ENCODE measurements at regions of chr9 and their contacts with region 1.

Region 1: GRCh38 chr9:70602321-70603019 is 188.0 kb upstream of the KLF9 start:
- DNase-seq: peak; percentile 54
- ATAC-seq: peak; percentile 73
- H3K4me3 Mint-ChIP-seq: no peak overlapping the region
- H3K27ac Mint-ChIP-seq: no peak overlapping the region
- H3K4me1 Mint-ChIP-seq: no peaks in the 10 kb centered on the region
- H3K27me3 Mint-ChIP-seq: no peaks in the 10 kb centered on the region

Region 2: DNA sequence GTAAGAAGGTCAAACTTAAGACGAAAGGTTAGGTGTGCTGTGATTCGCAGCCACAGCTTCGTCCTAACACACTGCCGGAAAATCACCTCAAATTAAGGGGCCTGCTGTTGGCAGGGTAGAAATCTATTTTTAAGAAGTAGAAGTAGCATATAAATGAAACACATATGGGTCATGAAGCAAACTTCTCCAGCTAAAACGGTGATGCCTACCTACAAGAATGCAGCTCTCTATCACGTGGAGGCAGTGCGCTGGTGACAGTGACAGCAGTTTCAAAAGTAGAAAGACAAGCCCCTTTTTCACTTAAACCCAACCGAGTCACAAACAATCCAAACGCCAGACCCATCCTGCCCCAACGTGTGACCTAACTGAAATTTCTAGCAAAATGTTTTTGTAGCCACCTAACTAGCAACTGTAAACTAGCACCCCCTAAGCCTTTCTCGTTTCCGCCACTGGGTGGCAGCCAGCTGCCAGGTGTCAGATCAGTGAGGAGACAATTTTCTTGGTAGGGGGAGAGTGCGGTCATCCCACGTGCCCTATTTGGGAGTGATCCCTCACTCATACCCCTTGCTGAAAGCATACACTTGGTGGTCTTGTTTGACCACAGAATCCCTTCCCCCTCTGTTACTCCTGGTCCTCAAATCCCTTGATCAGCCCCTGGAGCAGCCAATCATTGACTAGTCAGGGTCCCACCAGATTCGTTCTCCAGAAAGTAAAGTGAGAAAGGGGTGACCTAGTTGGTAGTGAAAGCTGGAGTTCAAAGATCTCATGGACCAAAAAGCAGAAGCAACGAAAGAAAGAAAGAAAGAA is 630.6 kb before region 1 on chr9:
- CTCF ChIA-PET with region 1: interaction called, 13 read pairs
- DNase-seq: peak; percentile 63
- ATAC-seq: no peak
- H3K4me3 Mint-ChIP-seq: no peak overlapping the region
- H3K27ac Mint-ChIP-seq: no peak overlapping the region
- H3K4me1 Mint-ChIP-seq: no peaks in the 10 kb centered on the region
- H3K27me3 Mint-ChIP-seq: peaks cover 9% of the 10 kb centered on the region

Region 3: DNA sequence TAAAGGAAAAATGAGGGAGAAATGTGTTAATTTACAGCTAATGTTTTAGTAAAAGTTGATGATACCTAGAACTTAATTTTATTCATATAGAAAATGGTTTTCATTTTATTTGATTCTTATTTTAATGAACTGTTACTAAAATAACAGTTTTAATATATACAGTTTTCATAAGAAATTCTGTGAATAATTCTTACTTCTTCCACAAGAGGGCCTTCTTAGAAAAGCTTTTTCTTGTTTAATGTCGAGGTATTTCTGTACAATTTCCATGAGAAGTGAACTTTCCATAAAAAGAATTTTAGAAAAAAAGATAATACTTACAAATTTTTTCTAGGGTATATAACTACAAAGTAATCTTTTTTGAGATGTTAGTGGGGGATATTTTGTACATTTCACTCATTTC is 261.9 kb before region 1 on chr9:
- CTCF ChIA-PET with region 1: interaction called, 30 read pairs
- DNase-seq: no peak
- ATAC-seq: no peak
- H3K4me3 Mint-ChIP-seq: no peak overlapping the region
- H3K27ac Mint-ChIP-seq: no peak overlapping the region
- H3K4me1 Mint-ChIP-seq: peaks cover 2% of the 10 kb centered on the region
- H3K27me3 Mint-ChIP-seq: no peaks in the 10 kb centered on the region

Region 4: GRCh38 chr9:70403166-70403565 is 199.3 kb before region 1 on chr9:
- CTCF ChIA-PET with region 1: interaction called, 11 read pairs
- DNase-seq: no peak
- ATAC-seq: no peak
- H3K4me3 Mint-ChIP-seq: no peak overlapping the region
- H3K27ac Mint-ChIP-seq: no peak overlapping the region
- H3K4me1 Mint-ChIP-seq: peaks cover 56% of the 10 kb centered on the region
- H3K27me3 Mint-ChIP-seq: no peaks in the 10 kb centered on the region

Region 5: DNA sequence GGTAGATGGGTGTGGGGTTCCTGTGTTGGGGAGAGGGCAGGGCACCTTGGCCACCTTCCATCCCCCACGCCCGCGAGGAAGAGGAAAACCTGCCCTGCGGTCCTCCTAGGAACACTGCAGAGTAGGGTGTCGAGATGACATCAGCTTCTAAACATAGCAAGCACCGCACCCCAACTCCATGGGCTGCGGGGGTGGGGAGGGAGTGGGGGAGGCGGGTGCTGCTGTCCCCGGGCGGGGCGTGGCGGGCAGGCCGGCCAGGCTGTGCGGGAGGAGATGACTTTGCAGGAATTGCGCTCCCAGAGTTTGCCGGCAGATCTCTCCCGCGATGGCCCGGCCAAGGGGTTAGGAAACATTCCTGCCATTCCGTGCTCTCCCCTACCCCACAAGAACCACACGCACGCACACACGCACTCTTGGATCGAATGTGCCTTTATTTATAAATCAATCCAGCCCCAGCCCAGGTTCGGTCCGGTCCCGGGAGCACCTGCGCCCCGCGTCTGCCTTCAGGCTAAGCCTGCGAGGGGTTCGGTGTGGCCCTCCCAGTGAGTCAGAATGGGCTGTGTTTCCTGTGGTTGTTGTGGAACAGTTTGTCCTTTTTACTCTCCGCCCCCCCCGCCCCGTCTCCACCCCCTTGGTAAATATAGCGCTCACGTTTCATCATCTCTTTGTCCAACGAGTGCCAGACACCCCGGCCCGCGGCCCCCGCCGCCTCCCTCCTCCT is 182.8 kb before region 1 on chr9:
- CTCF ChIA-PET with region 1: interaction called, 17 read pairs
- DNase-seq: peak; percentile 93
- ATAC-seq: peak; percentile 63
- H3K4me3 Mint-ChIP-seq: peak overlapping the region; percentile 83
- H3K27ac Mint-ChIP-seq: peak overlapping the region; percentile 98
- H3K4me1 Mint-ChIP-seq: peaks cover 45% of the 10 kb centered on the region
- H3K27me3 Mint-ChIP-seq: no peaks in the 10 kb centered on the region

Region 6: DNA sequence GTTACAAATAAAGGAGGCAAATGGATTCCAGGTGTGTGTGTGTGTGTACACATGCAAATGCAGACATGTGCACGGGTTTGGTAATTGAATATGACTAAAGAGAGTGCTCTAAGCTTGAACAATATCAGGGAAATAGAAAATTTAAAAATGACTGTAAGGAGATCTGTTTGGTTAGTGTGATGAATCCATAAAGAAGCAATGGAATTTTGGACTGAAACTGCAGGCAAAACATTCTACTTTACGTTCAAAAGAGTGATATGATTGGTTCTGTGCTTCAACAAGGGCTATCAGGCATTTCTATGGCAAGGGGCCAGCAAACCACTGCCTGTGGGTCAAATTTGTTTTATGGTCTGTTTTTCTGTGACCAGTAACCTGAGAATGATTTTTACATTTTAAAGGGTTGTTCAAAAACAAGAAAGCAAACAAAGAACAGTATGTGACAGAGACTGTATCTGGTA is 144.8 kb after region 1 on chr9:
- CTCF ChIA-PET with region 1: no interaction called
- DNase-seq: no peak
- ATAC-seq: no peak
- H3K4me3 Mint-ChIP-seq: no peak overlapping the region
- H3K27ac Mint-ChIP-seq: no peak overlapping the region
- H3K4me1 Mint-ChIP-seq: no peaks in the 10 kb centered on the region
- H3K27me3 Mint-ChIP-seq: peaks cover 7% of the 10 kb centered on the region

Region 7: GRCh38 chr9:70761139-70761670 is 158.7 kb after region 1 on chr9:
- CTCF ChIA-PET with region 1: no interaction called
- DNase-seq: no peak
- ATAC-seq: no peak
- H3K4me3 Mint-ChIP-seq: no peak overlapping the region
- H3K27ac Mint-ChIP-seq: no peak overlapping the region
- H3K4me1 Mint-ChIP-seq: no peaks in the 10 kb centered on the region
- H3K27me3 Mint-ChIP-seq: peaks cover 4% of the 10 kb centered on the region

Region 8: DNA sequence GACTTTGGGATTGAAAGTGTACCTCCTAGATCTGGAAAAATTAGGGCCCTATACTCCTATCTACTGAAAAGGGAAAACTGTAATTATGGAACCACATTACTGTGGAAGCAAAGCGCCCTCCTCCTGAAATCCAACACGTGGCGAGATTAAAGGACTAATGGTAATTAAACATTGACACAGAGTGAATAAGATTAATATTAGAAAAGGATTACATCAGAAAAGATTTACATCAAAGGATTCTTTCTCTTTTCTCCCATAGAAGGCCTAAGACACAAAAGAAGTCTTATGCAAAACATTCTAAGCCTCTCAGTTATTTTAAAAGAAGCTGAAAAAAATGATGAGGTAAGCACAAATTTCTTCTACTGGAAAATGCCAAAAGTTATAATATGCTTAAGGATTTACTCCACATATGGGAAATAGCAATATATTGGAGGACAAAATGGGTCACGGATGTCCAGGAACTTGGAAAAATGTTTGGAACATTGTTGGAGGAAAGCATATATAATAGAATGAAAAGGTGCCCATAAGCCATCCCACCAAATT is 291.2 kb after region 1 on chr9:
- CTCF ChIA-PET with region 1: no interaction called
- DNase-seq: no peak
- ATAC-seq: no peak
- H3K4me3 Mint-ChIP-seq: no peak overlapping the region
- H3K27ac Mint-ChIP-seq: no peak overlapping the region
- H3K4me1 Mint-ChIP-seq: no peaks in the 10 kb centered on the region
- H3K27me3 Mint-ChIP-seq: no peaks in the 10 kb centered on the region